B cell (primary cell): ENCODE measurements at regions of chr7 and their contacts with region 1.

Region 1: DNA sequence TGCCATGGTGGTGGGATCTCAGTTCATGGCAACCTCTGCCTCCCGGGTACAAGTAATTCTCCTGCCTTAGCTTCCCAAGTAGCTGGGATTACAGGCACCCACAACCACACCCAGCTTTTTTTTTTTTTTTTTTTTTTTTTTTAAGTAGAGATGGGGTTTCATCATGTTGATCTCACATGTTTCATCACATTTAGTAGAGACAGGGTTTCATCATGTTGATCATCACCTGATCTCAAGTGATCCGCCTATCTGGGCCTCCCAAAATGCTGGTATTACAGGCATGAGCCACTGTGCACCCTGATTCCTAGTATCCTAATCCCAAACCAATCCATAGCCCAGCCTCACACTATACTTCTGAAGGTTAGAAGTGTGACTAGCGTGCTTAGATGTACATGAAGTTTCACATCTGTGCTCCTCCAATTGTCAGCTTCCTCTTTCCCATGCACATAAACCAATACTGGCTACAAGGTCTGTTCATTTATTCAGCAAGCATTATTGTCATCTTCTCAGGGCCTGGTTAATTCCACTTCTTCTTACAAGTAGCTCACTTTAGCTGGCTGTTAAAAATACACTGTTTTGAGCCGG is 6.8 kb upstream of the NAT16 start:
- DNase-seq: no peak
- ATAC-seq: no peak
- H3K4me3 ChIP-seq: no peak overlapping the region
- H3K4me3 Mint-ChIP-seq: no peak overlapping the region
- H3K27ac ChIP-seq: no peak overlapping the region
- H3K27ac Mint-ChIP-seq: no peak overlapping the region
- H3K4me1 ChIP-seq: no peaks in the 10 kb centered on the region
- H3K4me1 Mint-ChIP-seq: peaks cover 4% of the 10 kb centered on the region
- H3K27me3 ChIP-seq: peaks cover 0 to 16% (median 5%) of the 10 kb centered on the region in 4 experiments
- H3K27me3 Mint-ChIP-seq: peaks cover 26% of the 10 kb centered on the region
- CTCF ChIP-seq: no peak

Region 2: DNA sequence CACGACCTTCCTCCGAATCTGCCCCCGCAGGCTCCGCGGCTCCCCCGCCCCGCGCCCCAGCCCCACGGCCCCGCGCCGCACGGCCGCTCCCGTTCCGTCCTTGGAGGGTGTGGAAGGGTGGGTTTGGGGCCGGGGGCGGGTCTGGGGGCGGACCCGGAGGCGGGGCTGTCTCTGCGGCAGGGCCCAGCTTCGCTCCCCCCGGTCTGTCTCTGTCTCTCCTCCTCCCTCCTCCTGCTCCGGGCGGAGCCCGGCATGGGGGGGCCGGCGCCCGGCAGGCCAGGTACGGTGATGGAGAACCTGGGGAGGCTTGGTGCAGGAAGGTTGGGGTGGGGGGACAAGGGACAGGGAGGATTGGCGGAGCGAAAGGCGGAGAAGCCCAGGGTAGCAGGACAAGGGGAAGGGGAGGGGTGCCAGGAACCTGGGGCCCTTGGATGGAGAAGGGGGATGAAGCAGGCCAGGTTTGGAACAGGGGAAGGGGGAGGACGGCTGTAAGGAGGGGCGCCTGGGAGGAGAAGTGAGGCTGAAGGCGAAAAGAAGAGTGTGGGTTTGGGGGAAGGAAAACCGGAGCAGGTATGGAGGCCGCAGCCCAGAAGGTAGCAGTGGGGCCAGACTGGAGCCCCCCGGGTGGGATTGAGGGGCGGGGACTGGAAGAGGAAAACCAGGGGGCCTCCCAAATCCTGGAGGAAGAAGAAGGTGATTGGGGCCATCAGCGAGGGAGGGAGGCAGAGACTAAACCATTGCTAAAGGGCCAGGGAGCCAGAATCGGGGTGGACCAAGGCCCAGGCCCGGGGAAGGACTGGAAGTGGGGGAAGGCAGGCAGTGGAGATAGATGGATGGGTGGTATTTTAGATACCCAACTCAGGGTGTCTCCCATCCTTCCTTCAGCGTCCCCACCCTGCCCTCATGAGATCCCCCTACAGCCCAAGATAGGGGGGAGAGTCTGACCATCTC is 702.9 kb before region 1 on chr7 and contains the start of gene NYAP1:
- CTCF ChIA-PET with region 1: no interaction called
- POLR2A ChIA-PET with region 1: no interaction called
- intact Hi-C with region 1: no loop called
- DNase-seq: no peak
- ATAC-seq: peak; percentile 18
- H3K4me3 ChIP-seq: peak within 1 kb of the TSS in 4 of 5 experiments; percentile 36 to 67 (median 49)
- H3K4me3 Mint-ChIP-seq: peak within 1 kb of the TSS; percentile 87
- H3K27ac ChIP-seq: no peak within 1 kb of the TSS
- H3K27ac Mint-ChIP-seq: peak within 1 kb of the TSS; percentile 37
- H3K4me1 ChIP-seq: peaks cover 11 to 17% of the 10 kb centered on the region in 2 donors
- H3K4me1 Mint-ChIP-seq: peaks cover 11% of the 10 kb centered on the region
- H3K27me3 ChIP-seq: peaks cover 0 to under 1% (median 0%) of the 10 kb centered on the region in 4 experiments
- H3K27me3 Mint-ChIP-seq: peaks cover 8% of the 10 kb centered on the region
- CTCF ChIP-seq: no peak
- total RNA-seq, gene NYAP1: not detected in 2 replicates

Region 3: GRCh38 chr7:101165075-101165957 is 21.6 kb before region 1 on chr7 and contains the start of gene VGF:
- CTCF ChIA-PET with region 1: interaction called, 12 read pairs
- POLR2A ChIA-PET with region 1: no interaction called
- intact Hi-C with region 1: no loop called
- DNase-seq: peak; percentile 95
- ATAC-seq: peak; percentile 83
- H3K4me3 ChIP-seq: peak within 1 kb of the TSS in 3 of 5 experiments; percentile 0 to 58 (median 17)
- H3K4me3 Mint-ChIP-seq: peak within 1 kb of the TSS; percentile 82
- H3K27ac ChIP-seq: no peak within 1 kb of the TSS
- H3K27ac Mint-ChIP-seq: peak within 1 kb of the TSS; percentile 81
- H3K4me1 ChIP-seq: peaks cover 56 to 67% of the 10 kb centered on the region in 2 donors
- H3K4me1 Mint-ChIP-seq: peaks cover 42% of the 10 kb centered on the region
- H3K27me3 ChIP-seq: peaks cover 0 to 79% (median 55%) of the 10 kb centered on the region in 4 experiments
- H3K27me3 Mint-ChIP-seq: peaks cover 51% of the 10 kb centered on the region
- CTCF ChIP-seq: no peak
- total RNA-seq, gene VGF: 0.12 and 0.17 TPM in 2 replicates

Region 4: GRCh38 chr7:101174322-101174854 is 12.5 kb before region 1 on chr7:
- CTCF ChIA-PET with region 1: interaction called, 13 read pairs
- POLR2A ChIA-PET with region 1: interaction called, 6 read pairs
- intact Hi-C with region 1: no loop called
- DNase-seq: no peak
- ATAC-seq: no peak
- H3K4me3 ChIP-seq: no peak overlapping the region
- H3K4me3 Mint-ChIP-seq: peak overlapping the region; percentile 56
- H3K27ac ChIP-seq: no peak overlapping the region
- H3K27ac Mint-ChIP-seq: no peak overlapping the region
- H3K4me1 ChIP-seq: peaks cover 57 to 59% of the 10 kb centered on the region in 2 donors
- H3K4me1 Mint-ChIP-seq: peaks cover 44% of the 10 kb centered on the region
- H3K27me3 ChIP-seq: peaks cover 0 to 98% (median 75%) of the 10 kb centered on the region in 4 experiments
- H3K27me3 Mint-ChIP-seq: peaks cover 81% of the 10 kb centered on the region
- CTCF ChIP-seq: no peak

Region 5: GRCh38 chr7:101217388-101218235 is 30.7 kb after region 1 on chr7 and contains the starts of genes PLOD3 and ZNHIT1:
- CTCF ChIA-PET with region 1: interaction called, 15 read pairs
- POLR2A ChIA-PET with region 1: no interaction called
- intact Hi-C with region 1: loop called (anchors 1 kb)
- DNase-seq: peak; percentile 98
- ATAC-seq: peak; percentile 80
- H3K4me3 ChIP-seq: peak within 1 kb of the TSS; percentile 85 to 99 (median 94)
- H3K4me3 Mint-ChIP-seq: peak within 1 kb of the TSS; percentile 97
- H3K27ac ChIP-seq: peak within 1 kb of the TSS; percentile 44 to 75
- H3K27ac Mint-ChIP-seq: peak within 1 kb of the TSS; percentile 95
- H3K4me1 ChIP-seq: peaks cover 18 to 21% of the 10 kb centered on the region in 2 donors
- H3K4me1 Mint-ChIP-seq: peaks cover 25% of the 10 kb centered on the region
- H3K27me3 ChIP-seq: no peaks in the 10 kb centered on the region
- H3K27me3 Mint-ChIP-seq: no peaks in the 10 kb centered on the region
- CTCF ChIP-seq: peak; percentile 6
- total RNA-seq, gene PLOD3: 47.5 and 47.9 TPM in 2 replicates
- total RNA-seq, gene ZNHIT1: 37.3 and 38.4 TPM in 2 replicates

Region 6: GRCh38 chr7:101287032-101287431 is 100.1 kb after region 1 on chr7:
- CTCF ChIA-PET with region 1: interaction called, 43 read pairs
- POLR2A ChIA-PET with region 1: no interaction called
- intact Hi-C with region 1: loop called (anchors 1 kb)
- DNase-seq: no peak
- ATAC-seq: no peak
- H3K4me3 ChIP-seq: no peak overlapping the region
- H3K4me3 Mint-ChIP-seq: no peak overlapping the region
- H3K27ac ChIP-seq: no peak overlapping the region
- H3K27ac Mint-ChIP-seq: no peak overlapping the region
- H3K4me1 ChIP-seq: peaks cover 0 to 13% of the 10 kb centered on the region in 2 donors
- H3K4me1 Mint-ChIP-seq: peaks cover 19% of the 10 kb centered on the region
- H3K27me3 ChIP-seq: peaks cover 0 to 6% (median 2%) of the 10 kb centered on the region in 4 experiments
- H3K27me3 Mint-ChIP-seq: peaks cover 10% of the 10 kb centered on the region
- CTCF ChIP-seq: no peak